ENCODE measurements at regions of chr6 and their contacts with region 1.

Region 1: GRCh38 chr6:64803470-64804166 is 903.4 kb downstream of the EYS start:
- DNase-seq: no peak
- H3K4me3 Mint-ChIP-seq: no peak overlapping the region
- H3K27ac Mint-ChIP-seq: no peak overlapping the region
- H3K4me1 Mint-ChIP-seq: no peaks in the 10 kb centered on the region
- H3K27me3 Mint-ChIP-seq: no peaks in the 10 kb centered on the region

Region 2: DNA sequence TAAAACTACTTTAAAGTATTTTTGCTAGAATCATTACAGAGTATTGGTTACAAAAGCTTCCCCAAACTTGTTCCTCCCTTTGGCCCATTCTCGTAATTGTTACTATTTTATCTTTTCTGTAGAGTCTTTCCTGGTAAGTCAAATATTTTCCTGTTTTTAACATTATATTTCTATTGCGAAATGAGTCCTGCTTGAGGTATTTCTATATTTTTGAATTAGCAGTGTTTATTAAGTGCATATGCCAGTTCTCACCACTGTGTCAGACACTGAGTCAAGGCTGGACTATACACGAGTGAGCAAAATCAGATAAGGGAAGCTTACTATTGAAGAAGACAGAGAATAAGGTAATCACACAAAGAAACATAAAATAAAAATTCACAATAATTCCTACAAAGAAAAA is 67.1 kb before region 1 on chr6:
- CTCF ChIA-PET with region 1: no interaction called
- intact Hi-C with region 1: no loop called
- DNase-seq: no peak
- H3K4me3 Mint-ChIP-seq: no peak overlapping the region
- H3K27ac Mint-ChIP-seq: no peak overlapping the region
- H3K4me1 Mint-ChIP-seq: no peaks in the 10 kb centered on the region
- H3K27me3 Mint-ChIP-seq: no peaks in the 10 kb centered on the region

Region 3: DNA sequence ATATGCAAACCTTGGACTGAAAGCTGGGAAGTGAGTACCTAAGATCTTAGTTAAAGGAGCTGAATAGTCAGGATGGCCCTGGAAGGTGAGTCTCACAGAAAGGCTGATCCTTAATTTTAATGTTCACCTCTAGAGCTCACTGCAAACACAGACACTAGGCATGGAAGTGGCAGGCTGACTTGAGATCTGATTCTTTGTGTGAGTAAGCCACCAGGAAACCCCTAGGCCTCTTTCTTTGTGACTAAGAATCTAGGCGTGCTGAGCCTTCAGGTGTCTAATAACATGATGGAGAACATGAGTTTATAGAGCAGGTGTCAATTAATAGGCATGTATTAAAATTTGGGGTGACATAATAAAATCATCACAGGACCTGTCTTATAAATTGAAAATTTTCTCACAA is 261.2 kb after region 1 on chr6:
- CTCF ChIA-PET with region 1: no interaction called
- intact Hi-C with region 1: no loop called
- DNase-seq: no peak
- H3K4me3 Mint-ChIP-seq: no peak overlapping the region
- H3K27ac Mint-ChIP-seq: no peak overlapping the region
- H3K4me1 Mint-ChIP-seq: no peaks in the 10 kb centered on the region
- H3K27me3 Mint-ChIP-seq: no peaks in the 10 kb centered on the region

Region 4: DNA sequence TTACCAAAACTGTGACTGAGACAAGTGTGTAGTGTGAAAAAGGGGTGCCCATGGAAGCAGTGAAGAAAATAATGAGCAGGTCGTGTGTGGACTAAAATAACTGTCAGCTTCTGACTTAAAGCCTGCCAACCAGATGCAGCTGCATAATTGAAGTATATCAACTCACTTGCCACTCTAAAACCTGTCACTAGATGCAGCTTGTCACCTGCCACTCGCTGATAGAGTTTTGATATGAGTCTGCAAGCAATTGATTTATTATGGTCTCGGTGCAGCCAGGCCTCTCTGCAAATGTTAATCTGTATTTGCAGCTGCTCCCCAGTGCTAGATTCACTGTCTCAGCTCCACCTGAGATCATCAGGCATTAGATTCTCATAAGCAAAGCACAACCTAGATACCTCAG is 1993.4 kb after region 1 on chr6:
- CTCF ChIA-PET with region 1: no interaction called
- intact Hi-C with region 1: loop called (anchors 5 kb)
- DNase-seq: no peak
- H3K4me3 Mint-ChIP-seq: no peak overlapping the region
- H3K27ac Mint-ChIP-seq: no peak overlapping the region
- H3K4me1 Mint-ChIP-seq: no peaks in the 10 kb centered on the region
- H3K27me3 Mint-ChIP-seq: no peaks in the 10 kb centered on the region